Common myeloid progenitor, CD34-positive (primary cell): ENCODE measurements at regions of chr2 and their contacts with region 1.

Region 1: GRCh38 chr2:172226244-172227061 is 123.8 kb upstream of the DLX2 start:
- DNase-seq: peak; percentile 31 to 86 (median 72)
- H3K4me3 ChIP-seq: no peak overlapping the region
- H3K27ac ChIP-seq: no peak overlapping the region
- H3K4me1 ChIP-seq: peaks cover 6 to 88% (median 59%) of the 10 kb centered on the region in 4 experiments
- H3K27me3 ChIP-seq: no peaks in the 10 kb centered on the region

Region 2: GRCh38 chr2:172253190-172254052 is 27.0 kb after region 1 on chr2:
- CTCF ChIA-PET with region 1: interaction called, 10 read pairs
- POLR2A ChIA-PET with region 1: no interaction called
- DNase-seq: peak; percentile 97 to 99 (median 99)
- H3K4me3 ChIP-seq: peak overlapping the region in 2 of 7 experiments; percentile 0 to 19
- H3K27ac ChIP-seq: peak overlapping the region; percentile 40 to 44
- H3K4me1 ChIP-seq: peaks cover 5 to 51% (median 46%) of the 10 kb centered on the region in 4 experiments
- H3K27me3 ChIP-seq: no peaks in the 10 kb centered on the region